ENCODE measurements at regions of chr1 and their contacts with region 1.

Region 1: GRCh38 chr1:11907275-11908094 is 18.7 kb downstream of the KIAA2013 start:
- DNase-seq: no peak
- H3K4me3 ChIP-seq: no peak overlapping the region; the same call in 1 of the 2 replicates
- CTCF ChIP-seq: peak; percentile 74

Region 2: DNA sequence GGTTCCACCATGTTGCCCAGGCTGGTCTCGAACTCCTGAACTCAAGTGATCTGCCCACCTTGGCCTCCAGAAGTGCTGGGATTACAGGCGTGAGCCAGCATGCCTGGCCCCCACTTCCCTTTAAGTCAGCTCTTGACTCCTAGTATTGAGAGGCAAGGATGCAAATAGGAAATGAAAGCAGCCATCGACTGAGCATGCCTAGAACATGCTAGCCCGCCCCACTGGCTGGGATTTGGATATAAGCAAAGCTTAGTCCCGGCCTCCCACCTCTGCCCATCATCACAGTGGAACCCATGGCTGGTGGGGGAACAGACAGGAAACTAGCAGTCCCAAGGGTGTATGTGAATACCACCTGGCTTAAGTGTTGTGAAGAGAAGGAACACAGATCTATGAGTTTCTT is 135.0 kb before region 1 on chr1:
- CTCF ChIA-PET with region 1: no interaction called
- POLR2A ChIA-PET with region 1: no interaction called
- DNase-seq: no peak
- H3K4me3 ChIP-seq: no peak overlapping the region
- CTCF ChIP-seq: no peak

Region 3: GRCh38 chr1:11805447-11806306 is 101.8 kb before region 1 on chr1 and contains the starts of genes CLCN6 and MTHFR:
- CTCF ChIA-PET with region 1: interaction called, 3 read pairs
- POLR2A ChIA-PET with region 1: interaction called, 17 read pairs
- DNase-seq: peak; percentile 91
- H3K4me3 ChIP-seq: peak within 1 kb of the TSS; percentile 95
- CTCF ChIP-seq: no peak

Region 4: DNA sequence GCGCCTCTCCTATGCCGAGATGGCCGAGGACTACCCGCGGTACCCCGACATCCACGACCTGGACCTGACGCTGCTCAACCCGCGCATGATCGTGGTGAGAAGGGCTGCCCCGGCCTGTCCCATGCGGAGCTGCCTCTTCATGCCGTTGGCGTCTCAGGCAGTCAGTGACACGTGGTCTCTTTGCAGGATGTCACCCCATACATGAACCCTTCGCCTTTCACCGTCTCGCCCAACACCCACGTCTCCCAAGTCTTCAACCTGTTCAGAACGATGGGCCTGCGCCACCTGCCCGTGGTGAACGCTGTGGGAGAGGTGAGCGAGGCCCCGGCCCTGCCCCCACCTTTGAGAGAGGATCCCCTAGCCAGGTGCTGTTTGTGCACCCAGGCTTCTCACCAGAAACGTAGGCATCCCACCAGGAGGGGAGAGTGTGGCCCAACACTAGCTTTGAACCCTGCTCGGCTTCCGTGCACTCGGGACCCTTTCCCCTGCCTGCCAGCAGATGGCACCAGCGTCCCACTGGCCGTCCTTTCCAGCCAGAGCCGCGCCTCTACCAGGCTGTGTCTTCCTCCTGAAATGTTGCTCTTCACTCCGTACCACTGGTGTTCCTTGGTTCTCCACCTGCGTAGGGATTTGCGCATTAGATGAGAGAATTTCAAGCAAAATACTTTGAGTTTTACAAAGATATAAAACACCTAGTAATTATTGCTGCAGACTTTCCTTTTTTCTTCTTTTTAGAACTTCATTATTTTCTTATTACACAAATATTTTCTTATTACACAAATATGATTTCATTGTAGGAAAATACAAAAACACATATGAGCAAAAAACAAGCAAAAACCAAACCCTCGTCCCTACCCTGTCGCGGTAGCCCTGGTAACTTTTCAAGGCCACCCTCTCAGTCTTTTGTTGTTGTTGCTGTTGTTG is 68.9 kb before region 1 on chr1:
- CTCF ChIA-PET with region 1: interaction called, 9 read pairs
- POLR2A ChIA-PET with region 1: interaction called, 21 read pairs
- DNase-seq: no peak
- H3K4me3 ChIP-seq: no peak overlapping the region
- CTCF ChIP-seq: peak; percentile 99

Region 5: GRCh38 chr1:11918779-11919519 is 11.5 kb after region 1 on chr1:
- CTCF ChIA-PET with region 1: interaction called, 11 read pairs
- POLR2A ChIA-PET with region 1: interaction called, 78 read pairs
- DNase-seq: peak; percentile 40
- H3K4me3 ChIP-seq: no peak overlapping the region
- CTCF ChIP-seq: no peak

Region 6: GRCh38 chr1:11934302-11935056 is 27.0 kb after region 1 on chr1 and contains the start of gene PLOD1:
- CTCF ChIA-PET with region 1: interaction called, 4 read pairs
- POLR2A ChIA-PET with region 1: interaction called, 40 read pairs
- DNase-seq: peak; percentile 29
- H3K4me3 ChIP-seq: peak within 1 kb of the TSS; percentile 84
- CTCF ChIP-seq: no peak

Region 7: GRCh38 chr1:11979851-11980675 is 72.6 kb after region 1 on chr1 and contains the start of gene MFN2:
- CTCF ChIA-PET with region 1: no interaction called
- POLR2A ChIA-PET with region 1: interaction called, 46 read pairs
- DNase-seq: peak; percentile 64
- H3K4me3 ChIP-seq: peak within 1 kb of the TSS; percentile 94
- CTCF ChIP-seq: no peak

Region 8: GRCh38 chr1:12336413-12336812 is 428.9 kb after region 1 on chr1:
- CTCF ChIA-PET with region 1: no interaction called
- POLR2A ChIA-PET with region 1: no interaction called
- DNase-seq: no peak
- H3K4me3 ChIP-seq: no peak overlapping the region
- CTCF ChIP-seq: no peak

Measured in AG04449 (cell line).